ENCODE measurements at regions of chr7 and their contacts with region 1.

Region 1: GRCh38 chr7:88111136-88111743 is 108.6 kb downstream of the SRI start:
- DNase-seq: no peak
- ATAC-seq: peak; percentile 74
- H3K4me3 ChIP-seq: no peak overlapping the region
- H3K27ac ChIP-seq: no peak overlapping the region
- H3K4me1 ChIP-seq: no peaks in the 10 kb centered on the region
- H3K27me3 ChIP-seq: no peaks in the 10 kb centered on the region
- CTCF ChIP-seq: peak; percentile 34 to 61 (median 44); a peak in 5 of 6 replicates
- EP300 ChIP-seq: no peak
- POLR2A ChIP-seq: no peak
- RAD21 ChIP-seq: peak; percentile 83

Region 2: GRCh38 chr7:87312215-87312865 is 798.9 kb before region 1 on chr7:
- CTCF ChIA-PET with region 1: interaction called, 4 read pairs
- POLR2A ChIA-PET with region 1: no interaction called
- RAD21 ChIA-PET with region 1: no interaction called
- SMC1A ChIA-PET with region 1: no interaction called
- in situ Hi-C with region 1: no loop called
- intact Hi-C with region 1: loop called (anchors 5 kb)
- DNase-seq: peak; percentile 15
- ATAC-seq: peak; percentile 81
- H3K4me3 ChIP-seq: no peak overlapping the region
- H3K27ac ChIP-seq: no peak overlapping the region
- H3K4me1 ChIP-seq: peaks cover 8% of the 10 kb centered on the region
- H3K27me3 ChIP-seq: no peaks in the 10 kb centered on the region
- CTCF ChIP-seq: peak; percentile 97 to 98 (median 98); a peak in 5 of 6 replicates
- EP300 ChIP-seq: no peak
- POLR2A ChIP-seq: no peak
- RAD21 ChIP-seq: peak; percentile 100

Region 3: GRCh38 chr7:87797798-87798403 is 313.3 kb before region 1 on chr7:
- CTCF ChIA-PET with region 1: interaction called, 25 read pairs
- POLR2A ChIA-PET with region 1: no interaction called
- RAD21 ChIA-PET with region 1: interaction called, 39 read pairs
- SMC1A ChIA-PET with region 1: interaction called, 28 read pairs
- in situ Hi-C with region 1: loop called (anchors 5 kb)
- intact Hi-C with region 1: loop called (anchors 1 kb)
- DNase-seq: peak; percentile 45
- ATAC-seq: peak; percentile 96
- H3K4me3 ChIP-seq: no peak overlapping the region
- H3K27ac ChIP-seq: no peak overlapping the region
- H3K4me1 ChIP-seq: no peaks in the 10 kb centered on the region
- H3K27me3 ChIP-seq: no peaks in the 10 kb centered on the region
- CTCF ChIP-seq: peak; percentile 56 to 81 (median 59); a peak in 4 of 6 replicates
- EP300 ChIP-seq: no peak
- POLR2A ChIP-seq: no peak
- RAD21 ChIP-seq: peak; percentile 89

Region 4: GRCh38 chr7:87886875-87887274 is 224.4 kb before region 1 on chr7:
- CTCF ChIA-PET with region 1: interaction called, 32 read pairs
- POLR2A ChIA-PET with region 1: interaction called, 5 read pairs
- RAD21 ChIA-PET with region 1: interaction called, 34 read pairs
- SMC1A ChIA-PET with region 1: interaction called, 25 read pairs
- in situ Hi-C with region 1: no loop called
- intact Hi-C with region 1: loop called (anchors 1 kb)
- DNase-seq: no peak
- ATAC-seq: no peak
- H3K4me3 ChIP-seq: no peak overlapping the region
- H3K27ac ChIP-seq: no peak overlapping the region
- H3K4me1 ChIP-seq: no peaks in the 10 kb centered on the region
- H3K27me3 ChIP-seq: no peaks in the 10 kb centered on the region
- CTCF ChIP-seq: peak in 2 of 3 experiments; percentile 8 to 32; a peak in 2 of 6 replicates
- EP300 ChIP-seq: no peak
- POLR2A ChIP-seq: no peak
- RAD21 ChIP-seq: peak; percentile 56

Region 5: DNA sequence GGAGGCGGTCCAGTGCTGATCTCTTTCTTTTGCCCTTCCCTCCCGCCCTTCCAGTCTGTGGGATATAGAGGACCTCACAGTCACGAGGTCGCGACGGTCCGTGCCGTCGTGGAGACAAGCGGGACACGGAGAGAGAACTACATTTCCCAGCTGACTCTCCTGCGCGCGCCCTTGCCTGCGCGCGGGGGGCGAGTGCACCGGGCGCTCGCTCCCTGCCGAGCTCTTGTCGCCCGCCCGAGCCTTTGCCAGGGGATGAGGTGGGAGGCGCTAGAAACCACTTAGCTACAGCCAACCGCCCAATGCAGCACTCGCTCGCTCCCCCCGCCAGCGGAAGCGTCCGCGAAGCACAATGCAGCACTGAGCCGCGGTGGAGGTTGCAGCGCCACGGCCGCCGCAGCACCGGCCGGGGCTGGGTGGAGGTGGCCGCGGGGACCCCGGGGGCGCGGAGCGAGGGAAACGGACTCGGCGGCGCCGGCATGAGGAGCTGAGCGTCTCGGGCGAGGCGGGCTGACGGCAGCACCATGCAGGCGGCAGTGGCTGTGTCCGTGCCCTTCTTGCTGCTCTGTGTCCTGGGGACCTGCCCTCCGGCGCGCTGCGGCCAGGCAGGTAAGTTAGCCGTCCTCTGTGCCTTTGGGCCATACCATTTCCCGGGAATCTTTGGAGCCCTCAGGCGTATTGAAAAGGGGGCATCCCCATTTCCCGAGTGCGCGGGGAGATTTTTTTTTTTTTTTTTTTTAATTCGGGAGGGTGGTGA is 177.1 kb before region 1 on chr7 and contains the start of gene ADAM22:
- CTCF ChIA-PET with region 1: interaction called, 8 read pairs
- POLR2A ChIA-PET with region 1: interaction called, 5 read pairs
- RAD21 ChIA-PET with region 1: interaction called, 8 read pairs
- SMC1A ChIA-PET with region 1: interaction called, 12 read pairs
- in situ Hi-C with region 1: no loop called
- intact Hi-C with region 1: loop called (anchors 5 kb)
- DNase-seq: peak; percentile 83
- ATAC-seq: peak; percentile 94
- H3K4me3 ChIP-seq: peak within 1 kb of the TSS; percentile 71
- H3K27ac ChIP-seq: peak within 1 kb of the TSS; percentile 60
- H3K4me1 ChIP-seq: no peaks in the 10 kb centered on the region; the same call in 1 of the 2 replicates
- H3K27me3 ChIP-seq: no peaks in the 10 kb centered on the region
- CTCF ChIP-seq: peak; percentile 14 to 46 (median 16); a peak in 3 of 6 replicates
- EP300 ChIP-seq: peak; percentile 16 to 57; a peak in 1 of 4 replicates
- POLR2A ChIP-seq: peak; percentile 97
- RAD21 ChIP-seq: peak; percentile 19; the same call in 1 of the 2 replicates
- polyA plus RNA-seq, gene ADAM22: 1.4 TPM

Region 6: GRCh38 chr7:88121335-88121734 is 10.1 kb after region 1 on chr7:
- CTCF ChIA-PET with region 1: interaction called, 7 read pairs
- POLR2A ChIA-PET with region 1: no interaction called
- RAD21 ChIA-PET with region 1: interaction called, 4 read pairs
- SMC1A ChIA-PET with region 1: interaction called, 10 read pairs
- in situ Hi-C with region 1: no loop called
- intact Hi-C with region 1: no loop called
- DNase-seq: no peak
- ATAC-seq: no peak; the same call in 2 of the 3 replicates
- H3K4me3 ChIP-seq: no peak overlapping the region
- H3K27ac ChIP-seq: no peak overlapping the region
- H3K4me1 ChIP-seq: no peaks in the 10 kb centered on the region
- H3K27me3 ChIP-seq: no peaks in the 10 kb centered on the region
- CTCF ChIP-seq: no peak
- EP300 ChIP-seq: no peak
- POLR2A ChIP-seq: no peak
- RAD21 ChIP-seq: no peak

Region 7: DNA sequence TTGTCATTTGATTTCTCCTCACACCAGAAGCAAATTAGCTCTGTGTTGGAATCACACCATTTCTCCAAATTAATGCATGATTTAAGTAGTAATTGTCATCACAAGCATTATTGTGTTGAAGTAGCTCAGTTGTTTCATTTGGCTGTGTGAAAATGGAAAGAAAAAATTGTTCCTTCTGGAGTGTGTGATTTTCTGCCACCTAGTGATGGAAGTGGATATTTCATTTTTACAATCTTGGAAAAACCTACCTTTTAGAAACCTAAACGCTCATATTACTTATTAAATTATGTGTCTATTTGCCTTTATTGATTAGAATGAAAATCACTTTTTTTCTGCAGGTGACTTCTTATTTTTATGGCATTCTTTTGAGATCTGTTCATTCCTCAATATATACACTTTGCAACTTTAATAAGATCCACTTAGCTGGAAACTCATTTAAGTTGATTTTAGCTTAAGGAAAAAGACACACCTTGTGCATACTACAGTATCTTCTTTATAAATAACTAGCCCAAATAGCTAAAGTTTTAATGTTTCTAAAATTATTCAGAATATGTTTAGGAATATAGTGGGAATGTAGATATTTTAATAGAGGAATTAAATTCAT is 58.6 kb after region 1 on chr7:
- CTCF ChIA-PET with region 1: interaction called, 11 read pairs
- POLR2A ChIA-PET with region 1: no interaction called
- RAD21 ChIA-PET with region 1: interaction called, 14 read pairs
- SMC1A ChIA-PET with region 1: interaction called, 17 read pairs
- in situ Hi-C with region 1: no loop called
- intact Hi-C with region 1: loop called (anchors 5 kb)
- DNase-seq: no peak
- ATAC-seq: peak; percentile 59
- H3K4me3 ChIP-seq: no peak overlapping the region
- H3K27ac ChIP-seq: no peak overlapping the region
- H3K4me1 ChIP-seq: no peaks in the 10 kb centered on the region
- H3K27me3 ChIP-seq: no peaks in the 10 kb centered on the region
- CTCF ChIP-seq: peak; percentile 37 to 58 (median 43); a peak in 5 of 6 replicates
- EP300 ChIP-seq: no peak
- POLR2A ChIP-seq: no peak
- RAD21 ChIP-seq: peak; percentile 55

Region 8: GRCh38 chr7:88306590-88307048 is 195.4 kb after region 1 on chr7 and contains the start of gene STEAP4:
- CTCF ChIA-PET with region 1: no interaction called
- POLR2A ChIA-PET with region 1: no interaction called
- RAD21 ChIA-PET with region 1: no interaction called
- SMC1A ChIA-PET with region 1: no interaction called
- in situ Hi-C with region 1: no loop called
- intact Hi-C with region 1: no loop called
- DNase-seq: no peak
- ATAC-seq: peak; percentile 27; the same call in 1 of the 3 replicates
- H3K4me3 ChIP-seq: no peak within 1 kb of the TSS
- H3K27ac ChIP-seq: no peak within 1 kb of the TSS
- H3K4me1 ChIP-seq: no peaks in the 10 kb centered on the region
- H3K27me3 ChIP-seq: peaks cover 0 to 9% of the 10 kb centered on the region in 2 experiments; a peak in 1 of 4 replicates
- CTCF ChIP-seq: no peak
- EP300 ChIP-seq: no peak
- POLR2A ChIP-seq: no peak
- RAD21 ChIP-seq: no peak
- polyA plus RNA-seq, gene STEAP4: not detected